Right cardiac atrium (tissue), 5 donors: ENCODE measurements at regions of chr1 and their contacts with region 1.

Region 1: DNA sequence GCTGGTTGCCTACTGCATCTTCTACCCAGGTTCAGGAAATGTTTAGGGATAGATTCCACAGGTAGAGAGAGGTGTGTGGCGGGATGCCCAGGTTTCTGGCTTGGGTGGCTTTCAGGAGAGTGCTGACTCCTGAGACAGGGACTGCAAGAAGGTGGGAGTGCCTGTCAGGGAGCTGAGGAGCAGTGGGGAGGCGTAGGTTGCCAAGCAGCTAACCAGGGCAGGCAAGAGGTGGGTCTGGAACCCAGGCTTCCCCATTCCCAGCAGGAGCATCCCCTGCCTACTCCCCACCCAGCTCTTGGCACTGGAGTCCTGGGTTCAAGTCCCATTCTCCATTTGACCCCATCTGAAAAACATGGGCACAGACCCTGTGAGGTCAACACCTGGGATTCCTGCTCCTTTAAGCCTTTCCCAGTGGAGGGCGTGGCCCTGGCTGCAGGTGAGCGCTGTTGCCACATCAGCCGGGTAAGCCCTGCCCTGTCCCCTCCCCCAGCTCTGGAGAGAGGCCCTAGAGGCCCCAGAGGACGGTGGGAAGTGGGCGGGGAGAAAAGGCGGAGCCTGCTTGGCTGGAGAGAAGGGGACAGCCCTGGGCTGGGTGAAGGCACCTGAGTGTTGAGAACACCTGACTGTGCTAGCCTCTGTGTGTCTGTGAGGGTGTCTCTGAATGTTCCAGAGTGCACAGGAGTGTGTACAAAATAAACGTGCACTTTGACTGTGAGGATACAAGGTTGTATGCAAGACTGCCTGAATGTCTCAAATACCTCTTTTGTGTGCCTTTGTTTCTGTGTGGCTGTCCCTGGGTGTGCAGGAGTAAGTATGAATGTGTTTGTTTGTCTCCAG is 14.0 kb upstream of the SYNC start:
- DNase-seq: peak; percentile 53 to 78 (median 73)
- ATAC-seq: peak; percentile 52 to 75
- H3K4me3 ChIP-seq: no peak overlapping the region
- H3K27ac ChIP-seq: no peak overlapping the region
- H3K4me1 ChIP-seq: no peaks in the 10 kb centered on the region
- H3K27me3 ChIP-seq: no peaks in the 10 kb centered on the region

Region 2: GRCh38 chr1:32651461-32652073 is 65.0 kb before region 1 on chr1:
- intact Hi-C with region 1: no loop called
- DNase-seq: no peak
- ATAC-seq: peak; percentile 13 to 28
- H3K4me3 ChIP-seq: peak overlapping the region; percentile 58
- H3K27ac ChIP-seq: peak overlapping the region; percentile 88
- H3K4me1 ChIP-seq: peaks cover 2% of the 10 kb centered on the region
- H3K27me3 ChIP-seq: no peaks in the 10 kb centered on the region

Region 3: GRCh38 chr1:32773018-32773763 is 56.7 kb after region 1 on chr1:
- intact Hi-C with region 1: loop called in 3 of 4 experiments (anchors 2 to 10 kb)
- DNase-seq: peak; percentile 81 to 95 (median 92)
- ATAC-seq: peak; percentile 76 to 81
- H3K4me3 ChIP-seq: no peak overlapping the region
- H3K27ac ChIP-seq: no peak overlapping the region
- H3K4me1 ChIP-seq: no peaks in the 10 kb centered on the region
- H3K27me3 ChIP-seq: no peaks in the 10 kb centered on the region

Region 4: DNA sequence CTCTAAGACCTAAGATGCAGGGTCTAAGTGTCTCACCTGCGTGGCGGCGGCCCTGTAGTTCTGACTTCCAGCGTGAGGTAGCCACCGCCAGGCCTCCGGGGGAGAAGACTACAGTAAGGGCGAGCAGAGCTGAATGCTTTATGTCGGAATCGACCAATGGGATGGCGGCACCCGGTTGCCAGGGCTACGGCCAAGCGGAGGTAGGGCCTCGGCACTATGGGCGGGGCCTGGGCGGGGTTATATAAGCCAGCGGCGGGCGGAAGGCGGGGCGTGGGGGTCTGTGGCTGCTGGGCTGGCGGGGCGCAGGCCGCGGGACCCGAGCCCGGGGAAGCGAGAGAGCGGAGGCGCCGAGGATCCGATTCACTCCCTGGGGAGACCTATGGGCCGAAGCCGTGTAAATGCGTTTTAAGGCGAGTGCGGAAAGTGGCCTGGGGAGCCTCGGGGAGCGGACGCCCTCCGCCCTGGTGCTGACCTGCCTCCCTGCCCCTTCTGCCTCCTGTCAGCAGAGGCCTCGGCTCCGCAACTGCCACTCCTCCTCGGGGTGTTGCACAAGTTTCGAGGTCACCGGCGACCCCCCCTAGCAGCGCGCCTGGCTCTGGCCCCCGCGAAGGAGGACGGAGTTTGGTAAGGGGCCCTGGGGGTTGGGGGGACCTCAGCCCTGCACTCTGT is 364.5 kb after region 1 on chr1 and contains the start of gene AZIN2:
- intact Hi-C with region 1: loop called in 1 of 4 experiments (anchors 10 kb)
- DNase-seq: peak; percentile 98 to 99 (median 99)
- ATAC-seq: peak; percentile 99
- H3K4me3 ChIP-seq: peak within 1 kb of the TSS; percentile 63
- H3K27ac ChIP-seq: no peak within 1 kb of the TSS
- H3K4me1 ChIP-seq: no peaks in the 10 kb centered on the region
- H3K27me3 ChIP-seq: no peaks in the 10 kb centered on the region
- total RNA-seq, gene AZIN2: 4.1 to 7.9 (median 5.4) TPM